Endothelial cell of umbilical vein (primary cell): ENCODE measurements at regions of chr1 and their contacts with region 1.

Region 1: GRCh38 chr1:158998781-158999161 is 10.9 kb upstream of the IFI16 start:
- DNase-seq: peak; percentile 87
- H3K4me3 ChIP-seq: peak overlapping the region; percentile 36 to 78 (median 57)
- H3K27ac ChIP-seq: peak overlapping the region; percentile 85
- H3K4me1 ChIP-seq: peaks cover 26% of the 10 kb centered on the region
- H3K27me3 ChIP-seq: peaks cover 2% of the 10 kb centered on the region in 2 experiments
- CTCF ChIP-seq: peak; percentile 62 to 69
- POLR2A ChIP-seq: no peak

Region 2: DNA sequence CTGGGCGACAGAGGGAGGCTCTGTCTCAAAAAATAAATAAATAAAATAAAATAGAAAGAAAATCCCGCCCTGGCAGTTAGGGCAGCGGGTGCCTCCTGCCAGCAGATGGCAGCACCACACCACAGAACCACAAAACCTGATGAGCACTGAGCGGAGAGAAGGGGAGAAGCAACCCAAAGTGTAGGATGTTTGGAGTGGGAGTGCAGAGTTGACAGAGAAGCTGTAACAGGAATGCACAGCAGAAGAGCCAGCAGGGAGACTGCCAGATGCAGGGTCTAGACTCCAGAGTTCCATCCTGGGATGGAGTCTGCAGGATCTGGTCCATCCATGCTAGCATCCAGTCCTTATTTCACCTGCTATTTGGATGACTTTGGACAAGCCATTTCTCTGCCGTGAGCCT is 1035.1 kb before region 1 on chr1:
- CTCF ChIA-PET with region 1: interaction called, 4 read pairs
- POLR2A ChIA-PET with region 1: no interaction called
- dilution Hi-C with region 1: no loop called
- intact Hi-C with region 1: loop called (anchors 2 kb)
- DNase-seq: peak; percentile 63
- H3K4me3 ChIP-seq: no peak overlapping the region
- H3K27ac ChIP-seq: no peak overlapping the region
- H3K4me1 ChIP-seq: peaks cover 7% of the 10 kb centered on the region
- H3K27me3 ChIP-seq: peaks cover 10 to 18% of the 10 kb centered on the region in 2 experiments
- CTCF ChIP-seq: peak; percentile 76 to 78
- POLR2A ChIP-seq: no peak

Region 3: GRCh38 chr1:158506369-158506987 is 492.3 kb before region 1 on chr1:
- CTCF ChIA-PET with region 1: interaction called, 17 read pairs
- POLR2A ChIA-PET with region 1: no interaction called
- dilution Hi-C with region 1: no loop called
- intact Hi-C with region 1: loop called (anchors 1 kb)
- DNase-seq: peak; percentile 43
- H3K4me3 ChIP-seq: no peak overlapping the region
- H3K27ac ChIP-seq: no peak overlapping the region
- H3K4me1 ChIP-seq: no peaks in the 10 kb centered on the region
- H3K27me3 ChIP-seq: peaks cover 0 to 1% of the 10 kb centered on the region in 2 experiments
- CTCF ChIP-seq: peak; percentile 25 to 60
- POLR2A ChIP-seq: no peak

Region 4: DNA sequence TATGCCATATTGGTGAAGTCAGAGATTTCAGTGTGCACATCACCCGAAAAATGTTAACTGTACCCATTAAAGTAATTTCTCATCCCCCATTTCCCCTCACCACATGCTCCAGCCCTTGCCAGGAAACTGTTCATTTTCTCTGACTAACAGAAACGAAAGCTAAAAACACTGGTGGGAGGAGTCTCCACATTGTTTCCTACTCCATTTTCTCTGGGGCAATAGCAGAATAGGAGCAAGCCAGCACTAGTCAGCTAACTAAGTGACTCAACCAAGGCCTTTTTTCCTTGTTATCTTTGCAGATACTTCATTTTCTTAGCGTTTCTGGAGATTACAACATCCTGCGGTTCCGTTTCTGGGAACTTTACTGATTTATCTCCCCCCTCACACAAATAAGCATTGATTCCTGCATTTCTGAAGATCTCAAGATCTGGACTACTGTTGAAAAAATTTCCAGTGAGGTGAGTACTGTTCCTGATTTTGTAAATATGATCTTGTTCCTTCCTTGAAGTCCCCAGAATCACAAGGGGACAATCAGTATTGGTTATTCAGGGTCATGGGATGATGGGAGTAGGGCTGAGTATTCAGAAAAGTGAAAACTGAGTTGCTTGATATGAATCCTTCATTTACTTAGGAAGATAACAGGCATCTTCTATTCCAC is 11.1 kb after region 1 on chr1 and contains the start of gene IFI16:
- CTCF ChIA-PET with region 1: interaction called, 18 read pairs
- POLR2A ChIA-PET with region 1: interaction called, 12 read pairs
- dilution Hi-C with region 1: no loop called
- intact Hi-C with region 1: loop called (anchors 1 kb)
- DNase-seq: peak; percentile 96
- H3K4me3 ChIP-seq: peak within 1 kb of the TSS; percentile 56 to 99 (median 99)
- H3K27ac ChIP-seq: peak within 1 kb of the TSS; percentile 86
- H3K4me1 ChIP-seq: peaks cover 37% of the 10 kb centered on the region
- H3K27me3 ChIP-seq: no peaks in the 10 kb centered on the region
- CTCF ChIP-seq: no peak
- POLR2A ChIP-seq: peak; percentile 83
- total RNA-seq, gene IFI16: 174 and 183 TPM in 2 replicates

Region 5: GRCh38 chr1:160031365-160032164 is 1032.8 kb after region 1 on chr1 and contains the start of gene PIGM:
- CTCF ChIA-PET with region 1: no interaction called
- POLR2A ChIA-PET with region 1: no interaction called
- dilution Hi-C with region 1: no loop called
- intact Hi-C with region 1: loop called (anchors 10 kb)
- DNase-seq: peak; percentile 81
- H3K4me3 ChIP-seq: peak within 1 kb of the TSS; percentile 43 to 99 (median 78)
- H3K27ac ChIP-seq: no peak within 1 kb of the TSS
- H3K4me1 ChIP-seq: peaks cover 11% of the 10 kb centered on the region
- H3K27me3 ChIP-seq: peaks cover 4 to 11% of the 10 kb centered on the region in 2 experiments
- CTCF ChIP-seq: no peak
- POLR2A ChIP-seq: no peak
- total RNA-seq, gene PIGM: 4.8 and 5.4 TPM in 2 replicates